Dorsolateral prefrontal cortex (tissue), 120 donors: ENCODE measurements at regions of chr7 and their contacts with region 1.

Region 1: GRCh38 chr7:55477781-55478374 is 94.4 kb downstream of the VOPP1 start:
- DNase-seq: no peak
- H3K4me3 ChIP-seq: no peak overlapping the region
- H3K27ac ChIP-seq: no peak overlapping the region
- H3K27me3 ChIP-seq: no peaks in the 10 kb centered on the region
- CTCF ChIP-seq: no peak

Region 2: DNA sequence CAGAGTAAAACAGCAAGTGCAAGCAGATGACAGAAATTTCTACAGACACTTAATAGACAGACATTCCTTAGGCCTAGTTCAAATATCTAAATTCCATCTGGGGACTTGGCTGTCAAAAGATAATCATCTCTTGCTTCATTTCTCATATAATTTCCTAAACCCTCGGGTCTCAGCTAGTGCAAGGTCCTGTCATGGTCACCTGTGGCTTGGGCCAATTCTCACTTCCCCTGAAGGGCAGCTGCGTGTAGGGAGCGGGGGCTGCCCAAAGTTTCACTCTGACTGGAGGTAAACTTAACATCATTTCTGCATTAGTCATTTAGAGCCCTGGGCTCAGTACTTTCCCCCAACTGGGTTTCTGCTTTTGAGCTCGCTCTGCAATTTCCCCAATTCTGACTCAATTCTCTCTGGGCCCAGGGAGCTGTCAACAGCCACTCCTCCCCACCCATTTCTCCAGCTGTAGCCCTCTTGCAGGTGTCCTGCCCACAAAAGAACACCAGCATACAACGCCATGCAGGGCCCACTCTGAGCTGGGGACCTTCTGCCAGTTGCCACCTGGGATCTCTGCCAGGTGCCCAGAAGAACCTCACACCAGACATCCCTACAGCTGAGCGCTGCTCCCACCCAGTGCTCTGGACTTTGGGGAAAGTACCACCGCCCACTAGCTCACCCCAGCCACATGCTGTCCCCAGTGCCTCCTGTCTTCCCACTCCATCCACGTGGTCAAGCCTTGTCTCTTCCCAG is 56.5 kb after region 1 on chr7:
- intact Hi-C with region 1: loop called in 1 of 2 experiments (anchors 10 kb)
- DNase-seq: peak in 2 of 10 donors; percentile 35 to 56
- H3K4me3 ChIP-seq: no peak overlapping the region
- H3K27ac ChIP-seq: peak overlapping the region in 44 of 59 donors; percentile 2 to 84 (median 52)
- H3K27me3 ChIP-seq: no peaks in the 10 kb centered on the region
- CTCF ChIP-seq: no peak